CD8-positive, alpha-beta T cell (primary cell): ENCODE measurements at regions of chr13 and their contacts with region 1.

Region 1: DNA sequence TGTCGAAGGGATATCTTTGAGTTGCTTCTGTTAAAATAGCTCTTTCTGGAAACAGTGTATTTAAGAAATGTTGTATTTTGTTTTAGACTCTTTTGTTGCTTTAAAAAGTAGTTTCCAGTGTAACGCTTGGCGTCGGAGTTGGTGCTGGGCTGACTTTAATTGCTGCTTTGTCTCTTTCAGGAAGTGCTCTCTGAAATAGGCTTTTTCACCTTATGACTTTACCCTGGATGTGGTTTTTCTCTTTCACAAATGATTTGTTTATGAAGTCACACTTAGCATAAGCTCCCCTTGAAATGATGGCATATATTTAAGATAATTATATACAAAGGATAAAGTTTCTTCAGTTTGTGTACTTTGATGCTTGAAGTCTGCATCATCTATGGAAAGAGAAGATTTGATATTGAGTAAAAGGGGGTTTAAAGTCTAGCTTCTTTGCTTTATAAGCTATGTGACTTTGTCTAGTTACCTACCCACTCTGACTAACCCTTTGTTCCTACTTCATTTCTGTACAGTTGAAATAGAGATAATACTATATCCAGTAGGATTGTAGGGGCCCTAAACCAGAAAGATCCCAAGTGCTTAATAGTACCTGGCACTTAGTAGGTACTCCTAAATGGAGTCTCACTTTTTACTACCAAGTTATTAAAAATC is at the start of gene GPR18:
- DNase-seq: peak in 4 of 9 experiments; percentile 41 to 80 (median 53)
- ATAC-seq: peak; percentile 77
- H3K4me3 ChIP-seq: peak within 1 kb of the TSS; percentile 55 to 63
- H3K4me3 Mint-ChIP-seq: peak within 1 kb of the TSS; percentile 91
- H3K27ac ChIP-seq: peak within 1 kb of the TSS; percentile 67 to 82
- H3K27ac Mint-ChIP-seq: peak within 1 kb of the TSS; percentile 94
- H3K4me1 ChIP-seq: peaks cover 63% of the 10 kb centered on the region
- H3K4me1 Mint-ChIP-seq: peaks cover 74% of the 10 kb centered on the region
- H3K27me3 ChIP-seq: no peaks in the 10 kb centered on the region
- H3K27me3 Mint-ChIP-seq: no peaks in the 10 kb centered on the region
- CTCF ChIP-seq: no peak
- total RNA-seq, gene GPR18: 31.9 to 36.2 TPM

Region 2: GRCh38 chr13:97295283-97296182 is 1962.8 kb before region 1 on chr13:
- CTCF ChIA-PET with region 1: no interaction called
- POLR2A ChIA-PET with region 1: no interaction called
- intact Hi-C with region 1: no loop called
- DNase-seq: peak in 1 of 9 experiments; percentile 17
- ATAC-seq: no peak
- H3K4me3 ChIP-seq: no peak overlapping the region
- H3K4me3 Mint-ChIP-seq: no peak overlapping the region
- H3K27ac ChIP-seq: no peak overlapping the region
- H3K27ac Mint-ChIP-seq: no peak overlapping the region
- H3K4me1 ChIP-seq: no peaks in the 10 kb centered on the region
- H3K4me1 Mint-ChIP-seq: peaks cover 35% of the 10 kb centered on the region
- H3K27me3 ChIP-seq: no peaks in the 10 kb centered on the region
- H3K27me3 Mint-ChIP-seq: no peaks in the 10 kb centered on the region
- CTCF ChIP-seq: no peak

Region 3: GRCh38 chr13:99133230-99133629 is 125.1 kb before region 1 on chr13:
- CTCF ChIA-PET with region 1: no interaction called
- POLR2A ChIA-PET with region 1: no interaction called
- intact Hi-C with region 1: no loop called
- DNase-seq: no peak
- ATAC-seq: no peak
- H3K4me3 ChIP-seq: no peak overlapping the region
- H3K4me3 Mint-ChIP-seq: no peak overlapping the region
- H3K27ac ChIP-seq: no peak overlapping the region
- H3K27ac Mint-ChIP-seq: no peak overlapping the region
- H3K4me1 ChIP-seq: no peaks in the 10 kb centered on the region
- H3K4me1 Mint-ChIP-seq: no peaks in the 10 kb centered on the region
- H3K27me3 ChIP-seq: no peaks in the 10 kb centered on the region
- H3K27me3 Mint-ChIP-seq: no peaks in the 10 kb centered on the region
- CTCF ChIP-seq: no peak

Region 4: DNA sequence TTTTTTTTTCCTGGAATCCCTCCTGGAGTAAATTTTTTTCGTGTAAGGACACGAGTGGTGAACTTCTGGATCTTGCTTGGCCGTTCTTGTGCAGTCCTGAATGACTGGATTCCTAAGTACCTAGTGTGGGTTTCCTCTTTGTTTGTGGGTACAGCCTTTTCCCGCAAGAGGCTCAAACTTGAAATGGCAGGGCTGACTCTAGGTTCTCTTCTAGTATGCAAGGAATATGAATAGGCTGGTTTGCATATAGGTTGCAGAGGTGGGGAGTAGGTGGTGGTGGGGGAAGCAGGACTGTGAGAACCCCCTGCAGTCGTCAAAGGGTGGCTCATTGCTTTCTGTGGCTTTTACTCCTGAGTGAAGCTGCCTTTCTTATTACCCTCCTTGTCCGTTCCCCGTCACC is 44.1 kb before region 1 on chr13:
- CTCF ChIA-PET with region 1: interaction called, 254 read pairs
- POLR2A ChIA-PET with region 1: interaction called, 15 read pairs
- intact Hi-C with region 1: loop called in 1 of 2 experiments (anchors 1 kb)
- DNase-seq: peak in 5 of 9 experiments; percentile 33 to 72 (median 60)
- ATAC-seq: peak; percentile 37
- H3K4me3 ChIP-seq: peak overlapping the region; percentile 9 to 65
- H3K4me3 Mint-ChIP-seq: peak overlapping the region; percentile 88
- H3K27ac ChIP-seq: peak overlapping the region; percentile 3 to 78
- H3K27ac Mint-ChIP-seq: peak overlapping the region; percentile 99
- H3K4me1 ChIP-seq: peaks cover 76% of the 10 kb centered on the region
- H3K4me1 Mint-ChIP-seq: peaks cover 81% of the 10 kb centered on the region
- H3K27me3 ChIP-seq: no peaks in the 10 kb centered on the region
- H3K27me3 Mint-ChIP-seq: no peaks in the 10 kb centered on the region
- CTCF ChIP-seq: no peak

Region 5: GRCh38 chr13:99220199-99220935 is 38.0 kb before region 1 on chr13:
- CTCF ChIA-PET with region 1: interaction called, 9 read pairs
- POLR2A ChIA-PET with region 1: interaction called, 15 read pairs
- intact Hi-C with region 1: loop called (anchors 1 to 2 kb)
- DNase-seq: peak in 3 of 9 experiments; percentile 36 to 79 (median 62)
- ATAC-seq: peak; percentile 16
- H3K4me3 ChIP-seq: no peak overlapping the region
- H3K4me3 Mint-ChIP-seq: peak overlapping the region; percentile 57
- H3K27ac ChIP-seq: peak overlapping the region; percentile 56 to 66
- H3K27ac Mint-ChIP-seq: peak overlapping the region; percentile 84
- H3K4me1 ChIP-seq: peaks cover 92% of the 10 kb centered on the region
- H3K4me1 Mint-ChIP-seq: peaks cover 89% of the 10 kb centered on the region
- H3K27me3 ChIP-seq: no peaks in the 10 kb centered on the region
- H3K27me3 Mint-ChIP-seq: no peaks in the 10 kb centered on the region
- CTCF ChIP-seq: no peak

Region 6: DNA sequence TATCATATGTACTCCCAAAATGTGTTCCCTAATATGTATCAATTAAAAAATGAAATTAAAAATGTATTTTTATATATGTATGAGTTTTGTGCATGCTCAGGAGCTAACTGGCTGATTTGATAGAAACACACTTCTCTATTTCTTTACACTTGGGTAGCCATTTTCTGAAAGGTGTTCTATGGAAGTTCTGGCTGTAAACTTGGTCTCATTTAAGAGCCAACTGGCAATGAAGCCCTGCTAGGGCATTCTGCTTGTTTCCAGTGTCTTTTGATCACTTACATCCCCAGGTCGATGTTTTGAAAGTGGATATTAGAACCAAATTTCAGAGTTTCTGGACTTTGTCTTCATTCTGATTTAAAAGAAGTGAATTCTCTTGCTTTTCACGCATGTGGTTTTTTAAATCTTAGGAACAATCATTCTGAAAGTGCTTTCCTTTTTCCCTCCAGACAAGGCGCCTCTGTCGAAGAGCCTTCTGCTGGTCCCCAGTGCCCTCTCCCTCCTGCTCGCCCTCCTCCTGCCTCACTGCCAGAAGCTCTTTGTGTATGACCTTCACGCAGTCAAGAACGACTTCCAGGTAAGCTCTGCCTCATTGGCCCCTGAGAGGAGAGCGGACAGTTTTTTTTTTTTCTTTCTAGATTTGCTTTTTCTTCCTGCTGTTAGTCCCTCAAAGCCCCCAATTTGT is 20.2 kb before region 1 on chr13:
- CTCF ChIA-PET with region 1: no interaction called
- POLR2A ChIA-PET with region 1: interaction called, 3 read pairs
- intact Hi-C with region 1: loop called in 1 of 2 experiments (anchors 2 kb)
- DNase-seq: peak in 2 of 9 experiments; percentile 55 to 73
- ATAC-seq: peak; percentile 82
- H3K4me3 ChIP-seq: peak overlapping the region; percentile 47 to 49
- H3K4me3 Mint-ChIP-seq: peak overlapping the region; percentile 92
- H3K27ac ChIP-seq: peak overlapping the region; percentile 52 to 82
- H3K27ac Mint-ChIP-seq: peak overlapping the region; percentile 100
- H3K4me1 ChIP-seq: peaks cover 52% of the 10 kb centered on the region
- H3K4me1 Mint-ChIP-seq: peaks cover 73% of the 10 kb centered on the region
- H3K27me3 ChIP-seq: no peaks in the 10 kb centered on the region
- H3K27me3 Mint-ChIP-seq: no peaks in the 10 kb centered on the region
- CTCF ChIP-seq: no peak

Region 7: DNA sequence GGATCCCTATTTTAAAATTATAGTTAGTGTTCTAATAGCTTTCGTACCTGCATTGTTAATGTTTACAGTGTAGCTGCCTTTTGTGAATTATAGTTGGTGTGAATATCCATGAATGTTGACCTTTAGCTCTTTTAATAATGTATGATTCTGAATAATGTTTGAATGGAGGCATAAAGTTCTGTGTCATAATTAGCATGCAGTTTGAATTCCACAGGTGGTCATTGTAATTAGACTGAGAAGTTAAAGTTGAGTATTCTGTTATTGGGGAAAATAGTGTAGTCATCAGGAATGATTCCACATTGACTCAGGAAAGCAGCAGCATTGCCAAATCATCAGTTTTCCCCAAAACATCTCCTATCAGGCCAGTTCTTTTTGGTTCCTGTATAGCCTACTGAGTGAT is 12.2 kb before region 1 on chr13:
- CTCF ChIA-PET with region 1: interaction called, 3 read pairs
- POLR2A ChIA-PET with region 1: interaction called, 5 read pairs
- intact Hi-C with region 1: loop called in 1 of 2 experiments (anchors 1 kb)
- DNase-seq: no peak
- ATAC-seq: no peak
- H3K4me3 ChIP-seq: no peak overlapping the region
- H3K4me3 Mint-ChIP-seq: no peak overlapping the region
- H3K27ac ChIP-seq: no peak overlapping the region
- H3K27ac Mint-ChIP-seq: peak overlapping the region; percentile 55
- H3K4me1 ChIP-seq: peaks cover 7% of the 10 kb centered on the region
- H3K4me1 Mint-ChIP-seq: peaks cover 47% of the 10 kb centered on the region
- H3K27me3 ChIP-seq: no peaks in the 10 kb centered on the region
- H3K27me3 Mint-ChIP-seq: no peaks in the 10 kb centered on the region
- CTCF ChIP-seq: no peak